WTC11 (cell line): ENCODE measurements at regions of chr1 and their contacts with region 1.

Region 1: GRCh38 chr1:100265931-100266740 is at the start of gene RTCA:
- DNase-seq: peak; percentile 96
- ATAC-seq: peak; percentile 95
- H3K4me3 Mint-ChIP-seq: peak within 1 kb of the TSS; percentile 99
- H3K27ac Mint-ChIP-seq: peak within 1 kb of the TSS; percentile 96
- H3K4me1 Mint-ChIP-seq: peaks cover 10% of the 10 kb centered on the region
- H3K27me3 Mint-ChIP-seq: peaks cover 12% of the 10 kb centered on the region
- CTCF ChIP-seq: no peak
- total RNA-seq, gene RTCA: 31.1 to 35.7 TPM (median 35.2 TPM) in 3 replicates

Region 2: GRCh38 chr1:100249537-100250257 is 16.4 kb before region 1 on chr1 and contains the start of gene DBT:
- CTCF ChIA-PET with region 1: interaction called, 10 read pairs
- POLR2A ChIA-PET with region 1: interaction called, 32 read pairs
- DNase-seq: peak; percentile 97
- ATAC-seq: peak; percentile 100
- H3K4me3 Mint-ChIP-seq: no peak within 1 kb of the TSS
- H3K27ac Mint-ChIP-seq: peak within 1 kb of the TSS; percentile 70
- H3K4me1 Mint-ChIP-seq: peaks cover 12% of the 10 kb centered on the region
- H3K27me3 Mint-ChIP-seq: no peaks in the 10 kb centered on the region
- CTCF ChIP-seq: no peak
- total RNA-seq, gene DBT: 20.1 to 22.9 TPM (median 21.6 TPM) in 3 replicates

Region 3: GRCh38 chr1:100299521-100300222 is 33.5 kb after region 1 on chr1:
- CTCF ChIA-PET with region 1: no interaction called
- POLR2A ChIA-PET with region 1: no interaction called
- DNase-seq: no peak
- ATAC-seq: no peak
- H3K4me3 Mint-ChIP-seq: no peak overlapping the region
- H3K27ac Mint-ChIP-seq: peak overlapping the region; percentile 28
- H3K4me1 Mint-ChIP-seq: peaks cover 23% of the 10 kb centered on the region
- H3K27me3 Mint-ChIP-seq: no peaks in the 10 kb centered on the region
- CTCF ChIP-seq: no peak

Region 4: DNA sequence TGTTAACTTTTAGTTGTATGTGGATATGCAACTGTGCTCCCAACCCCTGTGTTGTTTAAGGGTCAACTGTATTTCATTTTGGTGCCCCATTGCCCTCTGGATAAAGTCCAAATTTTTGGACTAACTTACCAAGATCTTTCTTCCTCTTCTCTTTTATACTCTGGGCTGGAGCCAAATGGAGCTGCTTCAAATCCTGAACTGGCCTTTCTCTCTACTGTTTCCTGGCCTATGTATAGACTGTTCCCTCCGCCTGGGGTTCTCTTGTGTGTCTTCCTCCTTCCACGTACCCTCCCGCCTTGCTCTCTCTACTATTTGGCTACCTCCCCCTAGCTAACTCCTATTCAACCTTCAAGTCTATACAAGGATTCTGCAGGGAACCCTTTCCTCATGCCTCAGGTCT is 77.8 kb after region 1 on chr1:
- CTCF ChIA-PET with region 1: no interaction called
- POLR2A ChIA-PET with region 1: no interaction called
- DNase-seq: no peak
- ATAC-seq: peak; percentile 88
- H3K4me3 Mint-ChIP-seq: no peak overlapping the region
- H3K27ac Mint-ChIP-seq: peak overlapping the region; percentile 15; the same call in 1 of the 2 replicates
- H3K4me1 Mint-ChIP-seq: peaks cover 4% of the 10 kb centered on the region
- H3K27me3 Mint-ChIP-seq: no peaks in the 10 kb centered on the region
- CTCF ChIP-seq: no peak